A549 (cell line): ENCODE measurements at regions of chr17 and their contacts with region 1.

Region 1: DNA sequence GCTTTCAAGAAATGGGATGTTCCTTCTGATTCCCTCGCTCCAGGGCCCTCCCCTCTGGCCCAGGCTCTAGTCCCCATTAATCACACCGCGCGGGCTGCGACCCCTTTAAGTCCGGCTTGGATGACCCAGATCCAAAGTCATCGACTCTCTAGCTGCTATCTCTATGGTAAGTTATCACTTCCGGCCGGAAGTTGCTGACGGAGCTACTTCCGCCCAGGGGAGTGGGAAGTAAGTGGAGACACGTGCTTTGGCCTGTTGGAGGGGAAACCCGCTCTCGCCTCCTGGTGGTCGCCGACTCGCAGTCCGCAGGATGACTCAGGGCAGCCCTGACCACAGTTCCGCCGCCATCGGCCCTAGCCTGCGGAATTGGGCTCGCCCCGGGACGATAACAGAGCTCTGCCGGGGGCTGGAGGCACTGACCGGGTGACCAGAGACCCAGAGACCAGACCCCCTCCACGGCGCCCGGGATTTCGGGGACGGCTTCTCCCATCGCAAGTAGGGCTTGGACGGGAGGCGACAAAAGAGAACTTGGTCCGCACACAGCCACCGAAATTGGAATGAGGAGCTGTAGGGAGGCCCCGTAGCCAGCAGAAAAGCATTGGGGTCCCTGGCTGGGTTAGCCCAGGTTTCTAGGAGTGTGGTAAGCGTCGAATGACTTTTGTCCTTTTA is 52.2 kb upstream of the SEC14L1 start:
- DNase-seq: peak; percentile 99
- ATAC-seq: peak; percentile 91 to 96
- H3K4me3 ChIP-seq: peak overlapping the region; percentile 99
- H3K27ac ChIP-seq: peak overlapping the region; percentile 96 to 100
- H3K4me1 ChIP-seq: peaks cover 28% of the 10 kb centered on the region
- CTCF ChIP-seq: peak; percentile 73
- EP300 ChIP-seq: no peak
- POLR2A ChIP-seq: peak; percentile 88
- RAD21 ChIP-seq: peak; percentile 46 to 67

Region 2: GRCh38 chr17:77042476-77043231 is 45.9 kb before region 1 on chr17:
- CTCF ChIA-PET with region 1: no interaction called
- POLR2A ChIA-PET with region 1: no interaction called
- DNase-seq: no peak
- ATAC-seq: no peak
- H3K4me3 ChIP-seq: no peak overlapping the region
- H3K27ac ChIP-seq: peak overlapping the region in 1 of 2 experiments; percentile 64; a peak in 3 of 6 replicates
- H3K4me1 ChIP-seq: peaks cover 18% of the 10 kb centered on the region
- CTCF ChIP-seq: no peak
- EP300 ChIP-seq: no peak
- POLR2A ChIP-seq: no peak
- RAD21 ChIP-seq: no peak

Region 3: DNA sequence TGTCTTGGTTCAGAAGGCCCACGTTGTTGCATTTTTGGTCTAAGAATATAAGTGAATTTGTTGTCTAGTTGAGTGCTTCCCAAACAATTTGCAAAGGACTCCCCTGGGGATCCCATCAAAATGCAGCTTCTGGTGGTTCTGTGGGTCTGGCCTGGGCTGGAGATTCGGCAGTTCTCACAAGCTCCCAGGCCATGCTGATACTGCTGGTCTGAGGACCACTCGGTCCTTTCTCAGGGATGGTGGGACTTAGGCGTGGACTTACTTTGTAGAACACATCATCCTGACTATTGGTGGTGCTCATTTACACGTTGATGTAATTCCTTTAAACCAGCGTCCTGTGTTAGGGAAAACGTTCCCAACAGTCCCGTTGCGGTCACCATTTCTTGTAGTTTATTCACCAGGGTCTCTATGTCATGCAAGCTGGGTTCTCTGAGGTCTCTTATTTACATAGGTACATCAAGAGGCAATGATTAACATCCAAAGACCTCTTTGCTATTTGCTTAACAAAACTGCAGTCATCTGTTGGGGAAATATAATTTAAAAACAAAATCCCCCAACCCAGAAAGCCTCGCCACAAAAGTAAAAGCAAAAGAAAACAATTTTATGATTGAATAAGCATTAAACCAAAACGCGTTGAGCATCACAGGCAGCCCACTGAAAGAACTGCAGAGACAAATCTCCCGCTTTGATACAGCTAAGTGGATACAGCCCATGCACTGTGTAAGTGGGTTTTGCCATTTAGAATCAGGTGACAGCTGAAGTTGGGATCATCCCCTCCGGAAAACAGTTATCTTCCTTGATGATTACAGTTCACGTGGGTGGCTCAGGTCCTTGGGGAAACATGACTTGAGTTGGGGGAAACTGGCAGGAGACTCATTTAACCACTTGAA is 13.2 kb after region 1 on chr17:
- CTCF ChIA-PET with region 1: interaction called, 35 read pairs
- POLR2A ChIA-PET with region 1: interaction called, 4 read pairs
- DNase-seq: no peak
- ATAC-seq: no peak; a peak in 2 of 6 replicates
- H3K4me3 ChIP-seq: no peak overlapping the region
- H3K27ac ChIP-seq: no peak overlapping the region
- H3K4me1 ChIP-seq: peaks cover 25% of the 10 kb centered on the region
- CTCF ChIP-seq: no peak
- EP300 ChIP-seq: no peak
- POLR2A ChIP-seq: no peak
- RAD21 ChIP-seq: no peak

Region 4: DNA sequence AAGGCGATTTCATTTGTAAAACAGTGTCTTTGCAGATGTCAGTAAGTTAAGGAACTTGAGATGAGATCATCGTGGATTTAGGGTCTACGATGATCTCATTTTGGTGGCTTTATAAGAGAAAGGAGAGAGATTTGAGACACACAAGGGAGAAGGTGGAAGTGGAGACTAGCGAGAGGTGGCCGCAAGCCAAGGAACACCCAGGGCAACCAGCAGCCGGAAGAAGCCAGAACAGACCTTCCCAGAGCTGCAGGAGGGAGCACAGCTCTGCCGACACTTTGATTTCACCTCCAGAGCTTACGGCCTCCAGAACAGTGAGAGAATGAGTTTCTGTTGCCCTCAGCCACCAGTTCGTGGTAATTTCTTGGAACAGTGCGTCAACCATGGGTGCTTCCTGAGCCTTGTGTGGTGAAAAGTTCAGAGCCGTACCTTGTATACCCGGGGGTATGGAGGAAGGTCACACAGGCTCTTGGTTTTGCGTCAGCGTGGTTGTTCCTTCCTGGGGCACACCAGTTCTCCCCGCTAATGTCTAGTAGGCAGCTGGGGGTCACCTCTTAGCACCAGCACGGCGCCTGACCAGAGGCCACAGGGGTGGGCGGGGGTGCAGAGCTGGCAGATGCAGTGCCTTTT is 39.3 kb after region 1 on chr17:
- CTCF ChIA-PET with region 1: interaction called, 121 read pairs
- POLR2A ChIA-PET with region 1: interaction called, 4 read pairs
- DNase-seq: no peak
- ATAC-seq: no peak
- H3K4me3 ChIP-seq: no peak overlapping the region
- H3K27ac ChIP-seq: peak overlapping the region; percentile 3 to 36; a peak in 4 of 6 replicates
- H3K4me1 ChIP-seq: peaks cover 66% of the 10 kb centered on the region
- CTCF ChIP-seq: no peak
- EP300 ChIP-seq: no peak
- POLR2A ChIP-seq: no peak
- RAD21 ChIP-seq: no peak

Region 5: DNA sequence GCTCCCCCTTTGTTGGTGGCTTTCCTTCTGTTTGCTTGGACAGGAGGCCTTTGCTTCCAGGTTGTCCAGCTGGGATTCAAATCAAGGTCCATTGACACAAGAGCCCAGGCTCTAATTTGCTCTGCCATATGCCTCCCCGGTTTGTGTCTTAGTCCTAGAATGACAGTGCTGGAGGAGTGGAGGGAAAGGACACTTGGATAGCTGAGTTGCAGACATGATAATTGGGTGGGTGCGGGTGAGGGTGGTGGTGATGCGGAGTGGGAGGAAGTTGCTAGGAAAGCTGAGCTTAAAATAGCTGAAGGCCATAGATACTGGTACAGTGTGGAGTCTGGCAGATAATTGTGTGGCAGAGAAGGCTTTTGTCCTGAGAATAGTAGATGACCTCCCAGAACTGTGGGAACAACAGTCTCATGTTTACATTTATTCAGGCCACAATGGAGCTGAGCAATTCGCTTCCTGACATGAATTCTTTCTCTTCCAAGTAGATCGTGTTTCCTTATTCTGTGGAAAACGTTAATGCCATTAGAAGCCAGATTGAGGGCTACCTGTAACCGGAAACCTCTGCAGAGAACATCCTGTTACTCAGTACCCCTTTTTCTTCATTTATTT is 76.0 kb after region 1 on chr17:
- CTCF ChIA-PET with region 1: interaction called, 13 read pairs
- POLR2A ChIA-PET with region 1: interaction called, 5 read pairs
- DNase-seq: no peak
- ATAC-seq: no peak
- H3K4me3 ChIP-seq: no peak overlapping the region
- H3K27ac ChIP-seq: no peak overlapping the region
- H3K4me1 ChIP-seq: peaks cover 20% of the 10 kb centered on the region
- CTCF ChIP-seq: no peak
- EP300 ChIP-seq: no peak
- POLR2A ChIP-seq: no peak
- RAD21 ChIP-seq: no peak

Region 6: GRCh38 chr17:77235370-77235941 is 146.9 kb after region 1 on chr17:
- CTCF ChIA-PET with region 1: interaction called, 60 read pairs
- POLR2A ChIA-PET with region 1: no interaction called
- DNase-seq: no peak
- ATAC-seq: no peak
- H3K4me3 ChIP-seq: no peak overlapping the region
- H3K27ac ChIP-seq: peak overlapping the region in 1 of 2 experiments; percentile 81; a peak in 3 of 6 replicates
- H3K4me1 ChIP-seq: peaks cover 14% of the 10 kb centered on the region
- CTCF ChIP-seq: no peak
- EP300 ChIP-seq: no peak
- POLR2A ChIP-seq: no peak
- RAD21 ChIP-seq: no peak